Adrenal gland (tissue), 19 donors: ENCODE measurements at regions of chr15 and their contacts with region 1.

Region 1: DNA sequence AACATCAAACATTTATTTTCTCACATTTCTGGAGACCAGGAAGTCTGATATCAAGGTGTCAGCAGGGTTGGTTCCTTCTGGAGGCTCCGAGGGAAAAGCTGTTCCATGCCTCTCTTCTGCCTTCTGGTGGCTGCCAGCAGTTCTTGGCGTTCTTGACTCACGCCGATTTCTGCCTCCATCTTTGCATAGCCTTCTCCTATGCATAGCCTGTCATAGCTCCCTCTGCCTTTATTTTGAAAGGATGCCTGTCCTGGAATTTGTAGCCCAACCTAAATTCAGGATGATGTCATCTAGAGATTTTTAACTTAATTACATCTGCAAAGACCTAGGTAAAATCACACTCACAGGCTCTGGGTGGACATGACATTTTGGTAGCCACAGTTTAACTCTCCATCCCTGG is 70.4 kb downstream of the RGMA start:
- DNase-seq: no peak
- H3K4me3 ChIP-seq: no peak overlapping the region
- H3K27ac ChIP-seq: no peak overlapping the region
- H3K4me1 ChIP-seq: peaks cover 0 to 6% of the 10 kb centered on the region in 2 donors
- H3K27me3 ChIP-seq: no peaks in the 10 kb centered on the region
- CTCF ChIP-seq: peak in 1 of 6 experiments; percentile 10
- POLR2A ChIP-seq: no peak

Region 2: DNA sequence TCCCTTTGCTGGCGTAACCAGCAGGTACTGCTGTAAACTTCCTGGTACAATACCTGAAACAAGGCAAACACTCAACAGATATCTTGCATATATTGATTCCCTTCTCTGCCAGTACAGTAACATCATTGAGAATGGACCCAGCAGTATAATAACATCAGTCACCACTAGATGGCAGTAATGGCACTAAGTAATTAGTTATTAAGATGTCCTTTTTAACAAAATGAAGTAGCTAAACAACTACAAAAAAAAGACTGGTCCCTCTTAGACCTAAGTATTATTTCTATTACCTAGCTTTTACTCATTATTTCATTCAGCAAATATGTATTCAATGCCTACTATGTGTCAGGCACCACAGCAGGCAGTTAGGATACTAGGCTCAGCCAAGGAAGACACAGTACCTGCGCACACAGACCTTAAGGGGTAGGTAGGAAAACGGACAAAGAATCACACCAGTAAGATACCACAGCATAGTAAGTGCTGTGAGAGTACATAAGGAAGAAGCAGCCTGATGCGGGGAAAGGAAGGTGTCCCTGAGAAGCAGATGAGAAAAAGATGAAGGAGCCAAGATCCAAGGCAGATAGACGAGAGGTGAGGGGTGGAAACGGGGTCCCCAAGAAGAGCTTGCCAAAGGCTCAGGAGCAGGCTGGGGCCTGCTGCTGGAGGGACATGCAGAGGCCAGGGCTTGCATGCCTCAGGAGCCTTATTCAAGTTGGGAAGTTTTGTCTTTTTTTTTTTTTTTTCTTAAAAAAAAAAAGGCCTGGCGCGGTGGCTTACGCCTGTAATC is 221.2 kb before region 1 on chr15:
- intact Hi-C with region 1: loop called (anchors 10 kb)
- DNase-seq: peak in 4 of 7 donors; percentile 50 to 61 (median 56)
- H3K4me3 ChIP-seq: no peak overlapping the region
- H3K27ac ChIP-seq: peak overlapping the region in 2 of 5 donors; percentile 39 to 56
- H3K4me1 ChIP-seq: peaks cover 0 to 10% of the 10 kb centered on the region in 2 donors
- H3K27me3 ChIP-seq: no peaks in the 10 kb centered on the region
- CTCF ChIP-seq: peak; percentile 70 to 87 (median 80)
- POLR2A ChIP-seq: no peak